A673 (cell line): ENCODE measurements at regions of chr20 and their contacts with region 1.

Region 1: GRCh38 chr20:45987108-45987780 is 15.2 kb upstream of the ZNF335 start:
- DNase-seq: peak; percentile 77
- H3K4me3 ChIP-seq: no peak overlapping the region
- H3K27ac ChIP-seq: no peak overlapping the region
- H3K4me1 ChIP-seq: no peaks in the 10 kb centered on the region
- H3K27me3 ChIP-seq: no peaks in the 10 kb centered on the region
- CTCF ChIP-seq: peak; percentile 97

Region 2: GRCh38 chr20:44765652-44766347 is 1221.4 kb before region 1 on chr20:
- CTCF ChIA-PET with region 1: no interaction called
- POLR2A ChIA-PET with region 1: no interaction called
- intact Hi-C with region 1: no loop called
- DNase-seq: no peak
- H3K4me3 ChIP-seq: no peak overlapping the region
- H3K27ac ChIP-seq: no peak overlapping the region
- H3K4me1 ChIP-seq: no peaks in the 10 kb centered on the region
- H3K27me3 ChIP-seq: peaks cover 3% of the 10 kb centered on the region
- CTCF ChIP-seq: no peak

Region 3: DNA sequence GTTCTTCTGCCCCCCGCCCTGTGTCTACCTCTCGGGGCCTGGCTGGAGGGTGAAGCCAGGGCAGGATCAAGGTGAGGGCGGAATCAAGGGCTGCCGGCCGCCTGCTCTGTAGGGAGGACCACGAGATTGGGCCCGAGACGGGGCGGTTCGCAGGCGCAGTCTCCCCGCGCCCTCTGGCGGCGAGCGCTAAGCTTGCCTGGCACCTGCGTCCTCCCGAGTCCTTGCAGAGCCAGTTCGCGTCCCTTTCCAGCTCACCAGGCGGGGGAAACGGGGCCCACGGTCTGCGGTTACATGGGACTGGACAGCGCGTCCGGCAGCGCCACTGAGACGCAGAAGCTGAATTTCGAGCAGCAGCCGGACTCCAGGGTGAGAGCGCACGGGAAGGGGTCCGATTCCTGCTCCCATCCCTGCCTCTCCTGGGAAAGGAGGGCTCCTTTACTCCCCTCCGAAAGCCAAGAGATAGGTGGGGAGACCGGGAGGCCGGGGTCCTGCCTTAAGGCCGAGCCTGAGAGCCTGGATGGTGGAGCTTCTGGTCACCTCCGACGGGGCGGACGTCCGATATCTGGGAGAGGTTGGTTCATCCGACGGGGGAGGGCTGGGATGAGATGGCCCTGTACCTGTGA is 675.5 kb before region 1 on chr20:
- CTCF ChIA-PET with region 1: no interaction called
- POLR2A ChIA-PET with region 1: no interaction called
- intact Hi-C with region 1: no loop called
- DNase-seq: peak; percentile 78
- H3K4me3 ChIP-seq: no peak overlapping the region
- H3K27ac ChIP-seq: no peak overlapping the region
- H3K4me1 ChIP-seq: no peaks in the 10 kb centered on the region
- H3K27me3 ChIP-seq: peaks cover 4% of the 10 kb centered on the region
- CTCF ChIP-seq: peak; percentile 96

Region 4: GRCh38 chr20:45971675-45972499 is 15.4 kb before region 1 on chr20 and contains the start of gene ZNF335:
- CTCF ChIA-PET with region 1: interaction called, 18 read pairs
- POLR2A ChIA-PET with region 1: no interaction called
- intact Hi-C with region 1: no loop called
- DNase-seq: peak; percentile 97
- H3K4me3 ChIP-seq: peak within 1 kb of the TSS; percentile 84
- H3K27ac ChIP-seq: peak within 1 kb of the TSS; percentile 100
- H3K4me1 ChIP-seq: peaks cover 11% of the 10 kb centered on the region
- H3K27me3 ChIP-seq: no peaks in the 10 kb centered on the region
- CTCF ChIP-seq: no peak
- total RNA-seq, gene ZNF335: 31.9 and 32.9 TPM in 2 replicates

Region 5: GRCh38 chr20:46013826-46014516 is 26.7 kb after region 1 on chr20:
- CTCF ChIA-PET with region 1: interaction called, 12 read pairs
- POLR2A ChIA-PET with region 1: no interaction called
- intact Hi-C with region 1: no loop called
- DNase-seq: peak; percentile 76
- H3K4me3 ChIP-seq: peak overlapping the region; percentile 41
- H3K27ac ChIP-seq: no peak overlapping the region
- H3K4me1 ChIP-seq: peaks cover 14% of the 10 kb centered on the region
- H3K27me3 ChIP-seq: no peaks in the 10 kb centered on the region
- CTCF ChIP-seq: peak; percentile 84

Region 6: DNA sequence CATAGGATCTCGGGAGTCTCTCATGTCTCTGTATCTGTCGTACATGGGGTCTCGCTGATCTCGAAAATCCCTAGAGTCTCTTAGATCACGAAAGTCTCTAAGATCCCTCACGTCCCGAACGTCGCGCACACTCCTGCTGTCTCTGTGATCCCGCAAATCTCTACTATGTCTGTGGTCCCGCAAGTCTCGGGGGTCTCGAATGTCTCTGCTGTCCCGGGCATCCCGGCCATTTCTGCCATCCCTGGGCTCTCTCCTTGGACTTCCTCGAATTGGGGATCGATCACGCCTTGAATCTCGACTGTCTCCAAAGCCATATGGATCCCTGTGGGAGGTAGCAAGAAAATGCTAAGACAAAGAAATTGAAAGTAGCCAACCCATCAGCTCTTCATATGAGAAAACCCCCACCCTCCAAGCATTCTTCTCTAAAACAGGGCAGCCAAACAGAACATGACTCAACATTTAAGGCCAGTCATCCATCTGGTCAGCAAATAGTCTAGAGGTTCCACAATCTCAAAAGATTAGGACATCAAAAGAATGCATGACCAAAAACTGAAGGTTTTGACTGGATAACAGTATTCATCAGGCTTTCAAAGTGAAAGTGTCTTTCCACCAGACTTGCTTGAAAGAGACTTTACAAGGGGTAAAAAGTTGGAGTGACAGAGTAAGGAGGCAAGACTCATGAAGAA is 83.1 kb after region 1 on chr20:
- CTCF ChIA-PET with region 1: interaction called, 10 read pairs
- POLR2A ChIA-PET with region 1: no interaction called
- intact Hi-C with region 1: no loop called
- DNase-seq: no peak
- H3K4me3 ChIP-seq: no peak overlapping the region
- H3K27ac ChIP-seq: no peak overlapping the region
- H3K4me1 ChIP-seq: no peaks in the 10 kb centered on the region
- H3K27me3 ChIP-seq: no peaks in the 10 kb centered on the region
- CTCF ChIP-seq: no peak

Region 7: DNA sequence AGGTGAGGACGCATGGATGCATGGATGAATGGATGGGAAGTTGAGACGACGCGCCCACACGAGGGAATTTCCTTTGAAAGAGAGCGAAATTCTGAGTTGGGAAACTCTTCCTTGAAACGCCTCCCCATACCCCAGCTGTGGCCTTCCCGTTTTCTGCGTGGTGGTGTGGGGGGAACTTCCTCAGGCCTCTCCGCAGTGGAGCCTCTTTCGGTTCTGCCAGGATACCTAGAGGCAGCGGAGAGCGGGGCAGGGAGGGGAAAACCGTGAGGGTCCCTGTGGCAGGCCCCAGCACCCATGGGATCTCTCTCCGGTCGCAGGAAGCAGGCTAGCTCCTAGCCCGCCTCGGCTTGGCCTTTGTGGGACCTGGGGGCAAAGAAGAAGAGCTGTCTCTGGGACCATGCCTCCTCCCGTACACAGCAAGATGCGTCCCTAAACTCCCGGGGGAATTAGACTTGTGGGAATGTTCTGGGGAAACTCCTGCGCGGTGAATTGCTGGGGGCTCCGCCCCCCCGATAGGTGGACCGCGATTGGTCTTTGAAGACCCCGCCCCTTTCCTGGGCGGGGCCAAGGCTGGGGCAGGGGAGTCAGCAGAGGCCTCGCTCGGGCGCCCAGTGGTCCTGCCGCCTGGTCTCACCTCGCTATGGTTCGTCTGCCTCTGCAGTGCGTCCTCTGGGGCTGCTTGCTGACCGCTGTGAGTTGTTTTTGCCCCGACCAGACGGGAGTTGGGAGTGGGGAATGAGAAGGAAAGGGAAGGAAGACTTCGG is 130.6 kb after region 1 on chr20 and contains the start of gene CD40:
- CTCF ChIA-PET with region 1: interaction called, 14 read pairs
- POLR2A ChIA-PET with region 1: no interaction called
- intact Hi-C with region 1: no loop called
- DNase-seq: peak; percentile 96
- H3K4me3 ChIP-seq: peak within 1 kb of the TSS; percentile 55
- H3K27ac ChIP-seq: peak within 1 kb of the TSS; percentile 76
- H3K4me1 ChIP-seq: peaks cover 9% of the 10 kb centered on the region
- H3K27me3 ChIP-seq: no peaks in the 10 kb centered on the region
- CTCF ChIP-seq: no peak
- total RNA-seq, gene CD40: 16.3 and 18.7 TPM in 2 replicates